ENCODE measurements at regions of chr19 and their contacts with region 1.

Region 1: DNA sequence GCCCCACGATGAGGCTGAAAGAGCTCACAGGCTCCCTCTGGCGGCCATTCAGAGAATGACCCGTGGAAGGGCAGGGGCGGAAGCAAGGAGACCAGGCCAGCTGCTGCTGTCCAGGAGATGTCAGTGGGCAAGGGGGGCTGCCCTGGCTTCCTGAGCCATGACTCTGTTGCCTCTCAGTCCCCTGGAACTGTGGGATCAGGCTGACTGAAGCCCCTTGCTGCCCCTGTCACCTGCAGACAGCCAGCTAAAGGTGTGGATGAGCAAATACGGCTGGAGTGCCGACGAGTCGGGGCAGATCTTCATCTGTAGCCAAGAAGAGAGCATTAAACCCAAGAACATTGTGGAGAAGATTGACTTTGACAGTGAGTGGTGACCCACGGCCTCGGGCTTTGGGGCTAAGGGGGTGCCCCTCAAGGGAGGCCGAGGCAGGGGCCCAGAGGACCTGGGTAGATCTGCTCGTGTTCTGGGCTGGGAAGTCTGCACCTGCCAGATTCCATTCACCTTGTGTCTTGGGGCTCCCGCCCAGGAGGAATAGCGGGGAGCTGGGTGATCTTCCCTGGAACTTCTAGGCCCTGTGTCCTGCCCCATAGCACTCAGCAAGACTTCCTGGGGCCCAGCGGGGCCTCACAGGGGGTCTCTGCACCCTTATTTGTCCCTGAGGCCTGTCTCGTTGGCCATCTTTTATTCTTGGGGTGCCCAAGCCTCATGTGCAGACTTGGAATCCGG is 12.5 kb upstream of the ACTN4 start:
- DNase-seq: no peak
- H3K4me3 ChIP-seq: no peak overlapping the region
- H3K27ac ChIP-seq: peak overlapping the region; percentile 64
- H3K4me1 ChIP-seq: peaks cover 26% of the 10 kb centered on the region
- H3K27me3 ChIP-seq: no peaks in the 10 kb centered on the region
- CTCF ChIP-seq: peak; percentile 89 to 98 (median 95)
- POLR2A ChIP-seq: no peak

Region 2: DNA sequence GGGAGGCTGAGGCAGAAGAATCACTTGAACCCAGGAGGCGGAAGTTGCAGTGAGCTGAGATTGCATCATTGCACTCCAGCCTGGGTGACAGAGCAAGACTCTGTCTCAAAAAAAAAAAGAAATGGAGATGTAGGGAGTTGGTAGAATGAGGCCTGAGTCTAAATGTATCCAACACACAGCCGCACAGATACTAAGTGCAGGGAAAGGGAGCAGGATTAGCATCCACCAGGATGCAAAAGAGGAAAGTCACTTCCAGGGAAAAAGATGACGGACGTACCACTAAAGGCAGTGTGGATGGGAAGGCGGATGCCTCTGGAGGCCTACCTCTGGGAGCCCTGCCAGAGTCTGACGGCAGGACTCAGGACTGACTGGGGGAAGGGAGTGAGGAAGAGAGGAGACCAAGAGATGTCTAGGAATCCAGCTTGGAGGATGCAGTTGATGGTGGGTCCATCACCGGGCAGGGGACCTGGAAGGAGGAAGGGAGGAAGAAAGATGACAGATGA is 225.2 kb before region 1 on chr19:
- intact Hi-C with region 1: loop called (anchors 5 kb)
- DNase-seq: no peak
- H3K4me3 ChIP-seq: no peak overlapping the region
- H3K27ac ChIP-seq: no peak overlapping the region
- H3K4me1 ChIP-seq: peaks cover 4% of the 10 kb centered on the region
- H3K27me3 ChIP-seq: no peaks in the 10 kb centered on the region
- CTCF ChIP-seq: no peak
- POLR2A ChIP-seq: no peak